ENCODE measurements at regions of chr1 and their contacts with region 1.

Region 1: DNA sequence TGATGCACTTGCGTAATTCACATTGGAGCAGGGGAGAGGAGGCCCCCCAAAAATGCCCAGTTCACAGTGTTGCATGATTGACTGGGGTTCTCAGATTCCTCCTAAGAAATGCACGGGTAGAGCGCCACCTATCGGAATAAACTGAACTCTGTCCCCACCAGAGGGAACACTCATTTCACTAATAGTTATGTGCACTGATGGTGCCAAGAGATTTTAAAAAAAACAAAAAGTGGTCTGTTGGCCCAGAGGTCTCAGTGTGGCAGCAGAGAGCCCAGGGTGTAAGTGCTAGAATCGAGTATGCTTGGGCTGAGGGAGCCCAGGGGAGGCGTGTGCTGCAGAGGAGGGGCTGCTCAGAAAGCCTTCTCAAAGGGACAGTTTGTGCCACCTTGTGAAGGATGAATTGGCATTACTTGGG is 6.9 kb downstream of the PINK1 start:
- DNase-seq: no peak
- ATAC-seq: peak; percentile 37 to 63
- H3K4me3 ChIP-seq: no peak overlapping the region
- H3K27ac ChIP-seq: no peak overlapping the region
- H3K4me1 ChIP-seq: no peaks in the 10 kb centered on the region
- H3K27me3 ChIP-seq: no peaks in the 10 kb centered on the region

Region 2: GRCh38 chr1:20521960-20522861 is 118.0 kb before region 1 on chr1:
- intact Hi-C with region 1: loop called (anchors 2 to 5 kb)
- DNase-seq: peak; percentile 70 to 84 (median 75)
- ATAC-seq: peak; percentile 70 to 82
- H3K4me3 ChIP-seq: no peak overlapping the region
- H3K27ac ChIP-seq: no peak overlapping the region
- H3K4me1 ChIP-seq: no peaks in the 10 kb centered on the region
- H3K27me3 ChIP-seq: no peaks in the 10 kb centered on the region

Region 3: DNA sequence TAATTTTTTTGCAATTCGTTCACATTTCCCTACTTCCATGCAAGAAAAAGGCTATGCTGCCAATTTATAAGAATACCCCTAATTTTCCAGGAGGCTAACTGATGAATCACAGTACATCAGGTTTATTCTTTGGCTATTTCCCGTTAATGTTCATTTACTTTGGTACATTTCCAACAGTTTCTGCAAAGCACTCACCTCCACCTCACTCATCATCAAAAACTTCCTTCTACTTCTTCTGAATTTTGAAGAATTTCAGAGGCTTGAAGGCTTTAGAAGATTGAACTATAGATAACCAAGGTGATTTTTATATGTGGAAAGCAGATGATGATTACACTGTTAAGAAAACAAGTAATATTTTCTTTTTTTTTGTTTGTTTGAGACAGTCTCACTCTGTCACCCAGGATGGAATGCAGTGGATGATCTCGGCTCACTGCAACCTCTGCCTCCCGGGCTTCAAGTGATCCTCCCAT is 207.5 kb after region 1 on chr1:
- intact Hi-C with region 1: no loop called
- DNase-seq: no peak
- ATAC-seq: no peak
- H3K4me3 ChIP-seq: no peak overlapping the region
- H3K27ac ChIP-seq: no peak overlapping the region
- H3K4me1 ChIP-seq: no peaks in the 10 kb centered on the region
- H3K27me3 ChIP-seq: no peaks in the 10 kb centered on the region

Measured in right cardiac atrium (tissue), 5 donors.